Right ventricle myocardium inferior (tissue), 1 donor: ENCODE measurements at regions of chr1 and their contacts with region 1.

Region 1: GRCh38 chr1:72037745-72038343 is 244.5 kb downstream of the NEGR1 start:
- DNase-seq: no peak
- ATAC-seq: no peak

Region 2: DNA sequence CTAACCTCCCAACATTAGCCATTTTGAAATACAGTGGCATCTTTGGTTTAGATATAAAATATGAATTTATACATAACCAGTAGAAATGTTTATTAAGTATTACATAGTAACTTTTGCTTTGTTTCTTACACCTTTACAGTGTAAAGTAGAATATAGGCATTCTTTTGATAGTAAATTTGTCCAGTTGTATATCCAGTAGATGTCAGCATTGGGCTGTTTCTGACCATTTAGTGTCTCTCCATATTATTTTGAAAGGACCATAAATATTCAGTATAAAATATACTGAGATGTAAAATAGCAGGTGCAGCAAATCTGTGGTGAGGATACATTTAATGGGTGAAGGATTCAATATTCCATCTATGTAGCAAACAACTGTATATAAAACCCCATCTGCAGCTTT is 841.2 kb before region 1 on chr1:
- intact Hi-C with region 1: loop called (anchors 10 kb)
- DNase-seq: no peak
- ATAC-seq: peak; percentile 47

Region 3: DNA sequence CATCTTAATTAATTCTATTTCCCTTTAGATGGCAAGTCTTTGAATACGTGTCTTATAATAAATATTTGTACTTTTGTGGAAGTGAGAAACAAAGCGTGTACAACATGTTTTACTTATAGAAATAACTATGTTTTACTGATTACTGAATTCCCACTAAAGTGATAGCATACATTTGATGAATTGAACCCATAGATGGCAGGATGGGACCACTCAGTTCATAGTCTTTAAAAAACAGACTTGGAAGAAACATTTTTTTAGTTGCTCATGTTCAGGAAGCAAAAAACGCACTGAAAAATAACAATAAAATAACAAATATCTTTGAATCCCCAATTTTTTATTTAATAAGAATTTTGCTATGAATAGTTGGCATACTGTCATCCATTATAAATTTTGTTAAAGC is 449.9 kb before region 1 on chr1:
- intact Hi-C with region 1: loop called (anchors 2 kb)
- DNase-seq: no peak
- ATAC-seq: no peak

Region 4: DNA sequence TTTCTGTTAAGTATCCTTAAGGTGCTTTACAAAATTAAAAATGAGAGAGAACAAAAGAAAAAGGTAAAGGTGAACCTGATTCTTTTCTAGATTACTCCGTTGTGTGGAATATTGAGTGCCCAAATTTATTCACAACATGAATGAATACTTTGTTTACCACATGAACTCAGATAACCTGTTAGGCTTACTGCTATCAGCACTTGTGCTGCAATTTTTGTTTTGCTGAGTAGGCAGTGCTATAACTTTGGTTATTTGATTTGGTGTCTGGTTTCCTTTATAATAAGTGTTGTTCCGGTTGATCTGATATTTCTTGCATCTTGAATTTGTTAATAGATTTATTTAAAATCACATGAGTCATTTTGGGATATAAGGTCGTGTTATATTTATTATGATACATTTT is 48.5 kb after region 1 on chr1:
- intact Hi-C with region 1: no loop called
- DNase-seq: no peak
- ATAC-seq: no peak